ENCODE measurements at regions of chr19 and their contacts with region 1.

Region 1: GRCh38 chr19:7394731-7395359 is 46.1 kb downstream of the ARHGEF18 start:
- DNase-seq: peak; percentile 82 to 84
- H3K4me3 ChIP-seq: peak overlapping the region; percentile 42 to 97 (median 89)
- H3K27ac ChIP-seq: peak overlapping the region in 2 of 3 donors; percentile 56 to 60
- H3K4me1 ChIP-seq: peaks cover 11 to 15% of the 10 kb centered on the region in 2 donors
- H3K27me3 ChIP-seq: no peaks in the 10 kb centered on the region
- CTCF ChIP-seq: no peak
- POLR2A ChIP-seq: peak in 1 of 2 donors; percentile 74

Region 2: DNA sequence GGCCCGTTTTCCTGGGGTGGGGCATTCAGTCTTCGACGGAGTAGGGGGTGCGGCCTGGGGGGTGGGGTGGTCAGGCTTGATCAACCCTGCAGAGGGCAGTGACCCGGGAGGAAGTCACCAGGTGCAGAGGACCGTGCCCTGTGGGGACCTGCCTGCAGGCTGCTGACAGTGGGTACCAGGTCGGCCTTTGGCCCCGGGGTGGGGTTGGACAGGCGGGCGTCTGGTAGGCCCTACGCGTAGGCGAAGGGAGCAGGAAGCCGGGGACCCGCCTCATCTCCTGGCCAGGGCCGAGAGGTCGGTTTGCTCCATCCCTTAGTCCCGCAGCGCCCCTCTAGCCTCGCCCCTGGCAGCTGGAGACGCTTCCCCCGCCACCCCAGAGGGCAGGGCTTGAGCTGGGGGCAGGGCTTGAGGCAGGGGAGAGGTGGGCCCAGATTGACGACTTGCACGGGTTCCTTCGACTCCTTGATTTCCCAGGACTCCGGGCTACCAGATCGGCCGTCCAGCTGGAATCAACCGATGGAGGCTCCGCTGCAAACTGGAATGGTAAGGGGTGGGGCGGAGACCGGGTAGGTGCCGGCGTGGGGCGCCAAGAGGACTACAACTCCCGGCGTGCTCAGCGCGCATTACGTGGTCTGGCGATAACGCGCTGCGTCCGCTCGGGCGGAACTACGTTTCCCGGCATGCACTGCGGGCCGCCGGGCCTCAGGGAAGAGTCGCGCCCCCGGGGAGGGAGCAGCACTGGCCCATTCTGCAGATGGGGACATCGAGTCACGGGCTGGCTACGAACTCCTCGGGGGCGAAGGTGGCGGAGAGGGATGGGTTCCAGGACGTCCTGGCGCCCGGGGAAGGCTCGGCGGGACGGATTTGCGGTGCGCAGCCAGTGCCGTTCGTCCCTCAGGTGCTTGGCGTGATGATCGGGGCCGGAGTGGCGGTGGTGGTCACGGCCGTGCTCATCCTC is 140.5 kb after region 1 on chr19 and contains the start of gene PNPLA6:
- intact Hi-C with region 1: loop called (anchors 10 kb)
- DNase-seq: peak; percentile 95 to 96
- H3K4me3 ChIP-seq: peak within 1 kb of the TSS; percentile 34 to 71 (median 42)
- H3K27ac ChIP-seq: peak within 1 kb of the TSS; percentile 52 to 92 (median 91)
- H3K4me1 ChIP-seq: peaks cover 13 to 17% of the 10 kb centered on the region in 2 donors
- H3K27me3 ChIP-seq: no peaks in the 10 kb centered on the region
- CTCF ChIP-seq: no peak
- POLR2A ChIP-seq: peak in 1 of 2 donors; percentile 70
- total RNA-seq, gene PNPLA6: 53.2 to 93.9 (median 84.1) TPM